ENCODE measurements at regions of chr11 and their contacts with region 1.

Region 1: GRCh38 chr11:100930185-100930778 is 199.3 kb downstream of the PGR start:
- DNase-seq: no peak

Region 2: GRCh38 chr11:100575870-100576705 is 354.2 kb before region 1 on chr11:
- intact Hi-C with region 1: loop called (anchors 5 kb)
- DNase-seq: no peak

Region 3: GRCh38 chr11:100632941-100633452 is 297.3 kb before region 1 on chr11:
- intact Hi-C with region 1: loop called (anchors 5 kb)
- DNase-seq: peak; percentile 81

Region 4: DNA sequence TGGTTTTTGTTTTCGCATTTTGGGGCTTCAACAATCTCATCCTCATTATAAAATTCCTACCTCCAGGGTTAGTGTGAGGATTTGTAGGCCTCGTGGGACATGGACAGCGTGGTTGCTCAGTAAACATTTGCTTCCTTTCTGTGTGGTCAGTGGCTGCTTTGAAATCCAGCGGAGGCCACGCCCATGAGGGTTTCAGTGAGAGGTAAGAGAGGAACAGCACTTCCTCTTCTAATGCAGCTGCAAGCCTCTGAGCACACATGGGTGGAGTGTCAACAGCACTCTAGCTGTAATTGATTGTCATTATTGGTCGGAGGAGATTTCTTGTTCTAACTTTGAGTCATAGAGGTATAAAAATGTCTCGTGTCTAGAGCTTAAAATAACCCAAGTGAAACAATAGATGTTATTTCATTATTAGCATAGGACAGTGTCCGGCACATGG is 249.2 kb before region 1 on chr11:
- intact Hi-C with region 1: loop called (anchors 2 kb)
- DNase-seq: no peak

Region 5: GRCh38 chr11:100863080-100863581 is 67.2 kb before region 1 on chr11:
- intact Hi-C with region 1: loop called (anchors 5 kb)
- DNase-seq: no peak

Measured in cardiac septum (tissue), 1 donor.